AG04450 (cell line): ENCODE measurements at regions of chr5 and their contacts with region 1.

Region 1: DNA sequence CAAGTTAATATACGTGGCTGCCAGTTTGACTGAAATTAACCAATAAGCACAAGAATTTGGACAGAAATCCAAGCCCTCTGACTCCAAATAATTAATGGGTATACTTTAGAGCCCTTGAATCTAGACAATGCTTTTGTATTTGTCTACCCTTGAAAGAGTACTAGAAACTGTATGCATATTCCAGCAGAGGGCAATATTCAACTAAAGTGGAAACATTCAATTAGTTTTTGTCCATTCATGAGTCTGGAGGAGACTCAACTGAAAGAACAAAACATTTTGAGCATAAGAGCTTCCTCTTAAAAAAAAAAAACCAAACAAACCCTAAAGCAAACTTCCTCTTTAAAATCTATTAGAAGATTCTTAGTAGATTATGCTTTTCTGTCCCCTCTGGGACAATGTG is 157.8 kb downstream of the ARHGEF28 start:
- DNase-seq: no peak
- H3K4me3 ChIP-seq: no peak overlapping the region
- H3K27ac ChIP-seq: no peak overlapping the region
- H3K27me3 ChIP-seq: no peaks in the 10 kb centered on the region
- CTCF ChIP-seq: peak; percentile 46

Region 2: DNA sequence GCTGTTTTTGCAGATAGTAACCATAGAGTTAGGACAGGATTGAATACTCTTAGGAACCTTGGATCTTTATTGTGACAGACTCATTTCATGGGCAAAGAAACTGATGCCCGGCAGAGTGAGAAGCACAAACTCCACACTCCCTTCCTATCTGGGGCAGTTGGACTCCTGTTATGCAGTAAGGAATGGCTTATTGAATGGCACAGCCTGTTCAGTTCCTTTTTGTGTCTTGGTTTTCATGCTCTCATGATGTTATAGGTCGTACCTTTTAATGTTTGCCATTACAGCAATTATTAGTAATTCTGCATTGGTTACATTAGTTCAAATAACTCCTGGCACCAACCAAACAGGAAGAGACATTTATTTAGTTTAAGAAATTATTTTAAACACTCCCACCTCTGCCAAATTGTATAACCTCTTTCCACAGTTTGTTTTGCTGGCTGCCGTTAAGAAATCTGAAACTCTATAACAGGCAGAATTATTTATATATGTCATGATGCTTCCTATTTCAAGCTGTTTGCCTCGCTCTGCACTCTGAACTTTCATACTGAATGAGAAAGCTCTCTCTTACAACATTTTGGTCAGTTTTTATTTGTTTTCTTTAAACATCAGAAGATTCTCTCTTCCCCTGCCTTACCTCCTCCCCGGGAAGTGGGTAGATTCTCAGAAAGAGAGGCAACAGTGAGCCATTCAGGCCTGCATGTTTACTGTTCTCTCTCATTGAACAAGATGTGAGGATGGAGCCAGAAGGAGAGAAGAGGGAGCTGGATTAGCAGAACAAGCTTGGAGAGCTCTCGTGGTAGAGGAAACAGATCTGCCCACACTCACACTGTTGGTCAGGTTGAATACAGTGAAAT is 13.4 kb before region 1 on chr5:
- CTCF ChIA-PET with region 1: interaction called, 10 read pairs
- POLR2A ChIA-PET with region 1: no interaction called
- DNase-seq: no peak
- H3K4me3 ChIP-seq: no peak overlapping the region
- H3K27ac ChIP-seq: no peak overlapping the region
- H3K27me3 ChIP-seq: no peaks in the 10 kb centered on the region
- CTCF ChIP-seq: no peak

Region 3: DNA sequence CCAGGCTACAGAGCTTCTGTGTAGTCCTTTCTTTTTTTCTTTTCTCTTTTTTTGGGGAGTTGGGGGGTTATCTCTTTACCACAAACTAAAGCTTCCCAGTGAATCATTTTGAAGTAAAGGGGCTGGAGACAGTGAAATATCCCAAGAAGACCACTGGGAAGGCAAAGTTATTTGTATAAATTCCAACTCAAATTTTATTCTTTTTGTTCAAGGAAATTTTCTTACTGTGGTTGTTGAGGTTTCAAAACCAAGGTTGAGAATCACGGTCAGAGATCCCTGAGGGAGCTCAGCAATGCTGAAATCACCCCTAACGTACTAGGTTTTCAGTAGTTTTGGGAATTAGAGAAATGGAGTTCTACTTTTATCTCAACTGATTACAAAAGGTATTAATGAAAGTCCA is 17.9 kb after region 1 on chr5:
- CTCF ChIA-PET with region 1: no interaction called
- POLR2A ChIA-PET with region 1: no interaction called
- DNase-seq: no peak
- H3K4me3 ChIP-seq: no peak overlapping the region
- H3K27ac ChIP-seq: no peak overlapping the region
- H3K27me3 ChIP-seq: no peaks in the 10 kb centered on the region
- CTCF ChIP-seq: no peak